Activated CD8-positive, alpha-beta T cell treated with anti-CD3 and anti-CD28 coated beads, Interleukin-2, amount 10 ng/mL, durations not matched to agents 7 days and 5 days (primary cell): ENCODE measurements at regions of chr2 and their contacts with region 1.

Region 1: DNA sequence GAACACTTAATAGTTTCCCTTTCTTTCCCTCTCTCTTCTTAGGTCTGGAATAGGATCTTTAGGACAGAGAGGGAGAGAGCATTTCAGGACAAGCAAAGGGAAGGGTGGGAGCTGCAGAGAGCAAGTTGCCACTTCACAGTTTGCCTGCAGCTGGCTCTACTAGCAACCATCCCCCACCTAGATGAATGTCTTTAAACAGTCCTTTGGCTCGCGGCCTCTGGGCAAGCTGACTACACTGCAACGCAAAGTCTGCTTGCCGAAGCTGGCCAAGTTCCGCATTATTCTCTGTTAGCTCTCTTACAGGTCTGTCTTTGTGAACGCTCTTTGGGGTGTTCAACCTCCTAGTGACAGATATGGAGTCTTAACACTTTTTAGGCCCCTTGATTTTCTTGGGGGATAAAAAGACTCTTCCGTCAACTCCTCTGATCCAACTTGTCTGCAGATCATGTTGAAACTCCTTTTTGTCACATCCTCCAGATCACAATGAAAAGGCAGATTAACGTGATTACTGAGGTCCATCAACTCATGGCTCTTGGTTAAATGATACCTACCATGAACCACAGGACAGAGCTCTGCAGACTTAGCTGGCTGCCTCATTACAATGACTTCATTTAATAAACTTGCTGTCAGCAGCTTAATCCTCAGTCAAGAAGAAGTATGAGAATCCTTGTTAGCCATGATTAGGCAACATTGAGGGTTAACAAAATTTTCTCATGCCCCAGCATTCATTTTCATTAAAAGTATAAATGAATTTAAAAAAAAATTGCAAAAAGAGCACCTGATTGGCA is 74.6 kb downstream of the SLC4A3 start:
- DNase-seq: no peak
- ATAC-seq: no peak
- H3K4me3 Mint-ChIP-seq: no peak overlapping the region
- H3K27ac Mint-ChIP-seq: no peak overlapping the region
- H3K4me1 Mint-ChIP-seq: no peaks in the 10 kb centered on the region
- H3K27me3 Mint-ChIP-seq: peaks cover 9% of the 10 kb centered on the region

Region 2: GRCh38 chr2:219689676-219690628 is 12.1 kb before region 1 on chr2:
- CTCF ChIA-PET with region 1: interaction called, 18 read pairs
- POLR2A ChIA-PET with region 1: no interaction called
- DNase-seq: peak; percentile 67
- ATAC-seq: peak; percentile 52
- H3K4me3 Mint-ChIP-seq: no peak overlapping the region
- H3K27ac Mint-ChIP-seq: no peak overlapping the region
- H3K4me1 Mint-ChIP-seq: peaks cover 10% of the 10 kb centered on the region
- H3K27me3 Mint-ChIP-seq: peaks cover 11% of the 10 kb centered on the region